MCF 10A (cell line): ENCODE measurements at regions of chr17 and their contacts with region 1.

Region 1: DNA sequence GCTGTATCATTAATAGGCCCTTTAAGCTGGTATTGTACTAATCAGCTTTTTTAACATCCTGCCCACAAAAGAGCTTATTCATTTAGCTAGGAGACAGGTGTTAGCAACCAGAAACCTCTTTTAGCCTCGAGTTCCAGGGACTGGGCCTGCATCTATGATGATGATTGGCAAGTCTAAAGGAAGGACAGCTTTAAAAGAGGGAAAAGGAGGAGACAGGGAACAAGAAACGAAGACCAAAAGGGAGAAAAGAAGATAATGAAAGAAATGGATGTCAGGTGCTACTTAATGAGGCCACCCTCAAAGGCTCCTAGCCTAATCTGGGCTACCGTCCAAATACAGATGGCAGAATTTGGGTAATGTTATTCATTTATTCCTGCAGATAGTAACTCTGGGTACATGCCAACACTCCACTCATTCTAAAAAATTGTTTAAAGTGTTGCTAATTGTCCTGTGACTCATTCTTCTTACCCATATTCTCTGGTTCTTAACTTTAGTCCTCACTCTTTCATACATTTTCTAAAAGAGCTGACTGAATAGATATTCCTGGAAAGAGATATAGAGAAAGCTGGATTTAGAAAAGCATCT is 18.7 kb upstream of the RFFL start:
- DNase-seq: peak; percentile 93
- H3K4me3 Mint-ChIP-seq: no peak overlapping the region
- H3K27ac Mint-ChIP-seq: no peak overlapping the region
- H3K4me1 Mint-ChIP-seq: peaks cover 25% of the 10 kb centered on the region
- H3K27me3 Mint-ChIP-seq: no peaks in the 10 kb centered on the region
- CTCF ChIP-seq: no peak

Region 2: DNA sequence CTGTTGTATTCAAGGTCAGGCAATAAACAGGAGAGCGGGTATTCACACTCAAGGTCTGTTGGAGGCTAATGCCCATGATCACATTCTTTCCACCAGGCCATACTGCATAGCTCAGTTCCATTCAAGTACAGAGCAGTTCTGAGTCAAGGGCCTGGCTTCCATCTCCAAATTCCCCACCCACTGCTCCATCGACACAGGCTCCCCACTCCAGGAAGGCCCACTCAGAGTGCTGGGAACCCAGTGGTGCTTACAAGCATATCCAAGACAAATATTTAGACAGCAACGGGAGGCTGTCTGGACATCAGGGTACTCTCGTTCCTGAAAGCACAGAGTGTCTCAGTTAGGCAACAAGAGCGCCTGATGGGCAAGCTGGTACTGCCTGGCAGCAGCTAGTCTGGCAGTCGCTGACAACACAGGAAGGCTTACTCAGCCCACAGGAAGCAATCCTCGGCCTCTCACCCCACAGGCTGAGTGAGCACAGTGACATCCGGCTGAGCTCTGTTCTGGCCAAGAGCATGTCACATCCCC is 59.6 kb before region 1 on chr17:
- CTCF ChIA-PET with region 1: no interaction called
- POLR2A ChIA-PET with region 1: interaction called, 11 read pairs
- intact Hi-C with region 1: loop called (anchors 5 kb)
- DNase-seq: peak; percentile 79
- H3K4me3 Mint-ChIP-seq: no peak overlapping the region
- H3K27ac Mint-ChIP-seq: peak overlapping the region; percentile 39
- H3K4me1 Mint-ChIP-seq: peaks cover 19% of the 10 kb centered on the region
- H3K27me3 Mint-ChIP-seq: no peaks in the 10 kb centered on the region
- CTCF ChIP-seq: no peak